Activated CD4-positive, alpha-beta T cell treated with anti-CD3 and anti-CD28 coated beads, Interleukin-2, amount 10 ng/mL, durations not matched to agents 24 days and 14 days (primary cell): ENCODE measurements at regions of chr4 and their contacts with region 1.

Region 1: DNA sequence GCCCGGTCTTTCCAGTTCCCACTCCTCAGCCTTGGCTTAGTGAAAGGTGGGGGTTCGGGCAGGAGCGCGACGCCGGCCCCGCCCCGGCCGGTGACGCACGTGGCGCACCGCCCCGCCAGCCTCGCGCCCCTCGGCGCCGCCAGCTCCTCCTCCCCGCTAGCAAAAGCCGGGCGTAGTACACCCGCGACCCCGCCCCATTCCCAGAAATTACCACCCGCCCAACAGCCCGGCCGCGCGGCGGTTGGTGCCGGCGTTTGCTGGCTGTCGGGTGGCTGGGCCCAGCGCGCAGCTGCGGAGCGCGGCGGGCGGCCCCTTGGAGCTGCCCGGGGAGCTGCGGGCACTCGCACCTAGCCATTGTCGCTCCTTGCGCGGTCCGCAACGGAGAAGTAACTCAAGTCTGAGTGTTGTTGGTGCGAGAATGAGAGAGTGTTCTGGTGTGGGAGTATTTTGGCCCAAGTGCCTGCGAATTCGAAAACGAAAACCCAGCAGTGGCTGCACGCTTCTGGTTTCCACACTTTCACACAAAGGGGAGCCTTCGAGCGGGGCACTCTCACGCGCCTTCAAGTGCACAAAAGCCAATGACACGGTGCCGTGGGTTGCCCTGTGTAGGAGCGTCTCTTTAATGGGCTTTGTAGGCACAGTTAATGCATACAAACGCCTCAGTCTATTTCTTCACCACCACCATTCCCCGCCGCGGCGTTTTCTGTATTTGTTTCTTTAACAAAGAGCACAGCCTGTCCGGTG is 1.0 kb upstream of the ELF2 start:
- DNase-seq: peak; percentile 100
- H3K4me3 Mint-ChIP-seq: peak overlapping the region; percentile 94
- H3K27ac Mint-ChIP-seq: peak overlapping the region; percentile 97
- H3K4me1 Mint-ChIP-seq: peaks cover 28% of the 10 kb centered on the region
- H3K27me3 Mint-ChIP-seq: peaks cover 29% of the 10 kb centered on the region

Region 2: GRCh38 chr4:138996090-138996489 is 181.9 kb before region 1 on chr4:
- intact Hi-C with region 1: no loop called
- DNase-seq: no peak
- H3K4me3 Mint-ChIP-seq: no peak overlapping the region
- H3K27ac Mint-ChIP-seq: no peak overlapping the region
- H3K4me1 Mint-ChIP-seq: no peaks in the 10 kb centered on the region
- H3K27me3 Mint-ChIP-seq: peaks cover 9% of the 10 kb centered on the region

Region 3: GRCh38 chr4:139015269-139015947 is 162.6 kb before region 1 on chr4 and contains the start of gene NOCT:
- intact Hi-C with region 1: loop called (anchors 1 kb)
- DNase-seq: peak; percentile 97
- H3K4me3 Mint-ChIP-seq: peak within 1 kb of the TSS; percentile 93
- H3K27ac Mint-ChIP-seq: peak within 1 kb of the TSS; percentile 96
- H3K4me1 Mint-ChIP-seq: peaks cover 35% of the 10 kb centered on the region
- H3K27me3 Mint-ChIP-seq: no peaks in the 10 kb centered on the region
- total RNA-seq, gene NOCT: 21.3 and 25.3 TPM in 2 replicates

Region 4: DNA sequence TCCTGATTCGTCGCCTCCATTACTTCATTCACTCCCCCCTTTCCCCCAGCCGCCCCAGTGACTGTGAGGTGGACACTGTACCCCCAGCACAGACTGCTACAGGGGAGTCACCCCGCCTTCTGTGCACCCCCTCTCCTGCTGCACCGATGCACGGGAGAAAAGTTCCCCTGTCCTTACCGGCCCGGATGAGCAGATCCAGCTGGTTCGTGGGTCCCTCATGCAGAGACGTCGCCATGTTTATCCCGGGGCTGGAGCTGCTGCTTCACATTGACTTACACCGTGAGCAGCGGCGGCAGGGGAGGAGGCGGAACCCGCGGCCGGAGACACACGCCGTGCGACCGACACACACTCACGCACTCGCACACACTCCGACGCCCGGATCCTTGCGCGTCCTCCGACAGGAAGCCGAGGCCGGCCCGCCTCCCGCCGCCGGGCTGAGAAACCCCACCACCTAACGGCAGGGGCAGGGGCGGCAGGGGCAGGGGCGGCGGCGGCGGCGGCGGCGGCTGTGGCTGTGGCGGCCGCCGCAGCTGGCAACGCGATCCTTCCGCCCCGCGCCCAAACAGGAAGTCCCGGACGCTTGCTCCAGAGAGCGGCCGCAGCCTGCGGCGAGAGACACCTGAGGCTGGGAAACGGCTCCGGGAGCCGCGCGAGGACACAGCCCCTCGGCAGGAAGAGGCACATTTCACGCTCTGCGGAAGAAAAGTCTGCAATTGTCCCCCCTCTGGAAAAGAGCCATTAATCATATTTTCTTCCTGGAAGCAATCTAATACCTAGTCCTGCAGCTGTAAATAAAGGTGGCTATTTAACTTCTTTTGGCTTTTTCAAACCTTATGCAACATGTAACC is 93.9 kb before region 1 on chr4:
- intact Hi-C with region 1: loop called (anchors 1 kb)
- DNase-seq: peak; percentile 95
- H3K4me3 Mint-ChIP-seq: peak overlapping the region; percentile 100
- H3K27ac Mint-ChIP-seq: peak overlapping the region; percentile 100
- H3K4me1 Mint-ChIP-seq: peaks cover 30% of the 10 kb centered on the region
- H3K27me3 Mint-ChIP-seq: peaks cover 2% of the 10 kb centered on the region

Region 5: DNA sequence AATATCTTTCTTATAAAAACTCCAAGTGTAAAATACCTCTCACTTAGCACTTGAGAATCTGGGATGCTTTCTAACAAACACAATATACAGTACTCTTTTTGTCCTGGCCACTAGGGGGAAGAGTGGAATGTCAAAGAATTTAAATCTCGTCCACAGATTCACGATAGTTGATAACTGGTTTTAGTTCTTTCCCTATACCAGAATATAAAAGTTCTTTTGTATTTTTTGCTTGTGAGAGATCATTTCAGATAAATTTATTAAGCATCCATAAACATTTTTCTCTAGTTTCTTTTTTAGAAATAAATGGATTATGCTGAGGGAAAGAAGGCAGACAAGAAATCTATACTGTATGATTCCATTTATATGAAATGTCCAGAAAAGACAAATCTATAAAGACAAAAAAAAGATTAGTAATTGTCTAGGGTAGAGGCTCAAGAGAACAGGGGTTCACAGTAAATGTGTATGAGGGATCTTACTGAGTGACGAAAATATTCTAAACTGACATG is 51.5 kb after region 1 on chr4:
- intact Hi-C with region 1: loop called (anchors 2 kb)
- DNase-seq: peak; percentile 75
- H3K4me3 Mint-ChIP-seq: no peak overlapping the region
- H3K27ac Mint-ChIP-seq: no peak overlapping the region
- H3K4me1 Mint-ChIP-seq: no peaks in the 10 kb centered on the region
- H3K27me3 Mint-ChIP-seq: no peaks in the 10 kb centered on the region

Region 6: DNA sequence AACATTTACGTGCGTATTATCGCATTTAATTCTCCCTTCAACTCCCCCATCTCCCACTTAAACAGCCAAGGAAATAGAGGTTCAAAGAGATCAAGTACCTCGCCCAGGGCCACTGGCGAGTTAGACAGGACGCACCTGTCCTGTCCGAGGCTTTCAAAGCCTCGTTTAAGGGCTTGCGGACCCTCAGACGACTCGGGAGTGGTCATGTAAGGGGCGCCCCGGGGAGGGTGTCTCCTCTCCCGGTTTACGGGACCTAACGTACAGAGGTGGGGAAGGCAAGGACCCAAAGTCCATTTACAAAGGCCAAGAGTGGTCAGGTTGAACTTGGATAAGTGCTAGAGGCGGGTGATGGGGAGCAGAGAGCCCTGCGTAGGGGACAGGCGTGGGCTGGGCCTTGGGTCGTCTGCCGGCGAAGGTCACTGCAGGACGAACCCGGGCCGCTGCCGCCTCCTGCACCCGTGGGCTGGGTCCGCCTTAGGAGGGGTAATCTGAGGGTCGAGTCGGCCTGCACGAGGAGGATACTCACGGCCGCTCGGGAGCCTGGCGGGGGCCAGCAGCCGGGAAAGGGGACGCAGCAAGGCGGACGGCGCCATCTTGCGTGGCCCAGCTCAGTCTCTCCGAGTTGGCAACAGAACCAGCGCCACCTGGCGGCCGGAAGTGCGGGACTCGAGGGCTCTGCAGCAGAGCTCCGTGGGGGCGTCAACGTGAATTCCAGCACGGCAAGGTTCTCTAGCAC is 117.3 kb after region 1 on chr4:
- intact Hi-C with region 1: loop called (anchors 1 kb)
- DNase-seq: peak; percentile 99
- H3K4me3 Mint-ChIP-seq: peak overlapping the region; percentile 95
- H3K27ac Mint-ChIP-seq: peak overlapping the region; percentile 98
- H3K4me1 Mint-ChIP-seq: peaks cover 36% of the 10 kb centered on the region
- H3K27me3 Mint-ChIP-seq: no peaks in the 10 kb centered on the region

Region 7: DNA sequence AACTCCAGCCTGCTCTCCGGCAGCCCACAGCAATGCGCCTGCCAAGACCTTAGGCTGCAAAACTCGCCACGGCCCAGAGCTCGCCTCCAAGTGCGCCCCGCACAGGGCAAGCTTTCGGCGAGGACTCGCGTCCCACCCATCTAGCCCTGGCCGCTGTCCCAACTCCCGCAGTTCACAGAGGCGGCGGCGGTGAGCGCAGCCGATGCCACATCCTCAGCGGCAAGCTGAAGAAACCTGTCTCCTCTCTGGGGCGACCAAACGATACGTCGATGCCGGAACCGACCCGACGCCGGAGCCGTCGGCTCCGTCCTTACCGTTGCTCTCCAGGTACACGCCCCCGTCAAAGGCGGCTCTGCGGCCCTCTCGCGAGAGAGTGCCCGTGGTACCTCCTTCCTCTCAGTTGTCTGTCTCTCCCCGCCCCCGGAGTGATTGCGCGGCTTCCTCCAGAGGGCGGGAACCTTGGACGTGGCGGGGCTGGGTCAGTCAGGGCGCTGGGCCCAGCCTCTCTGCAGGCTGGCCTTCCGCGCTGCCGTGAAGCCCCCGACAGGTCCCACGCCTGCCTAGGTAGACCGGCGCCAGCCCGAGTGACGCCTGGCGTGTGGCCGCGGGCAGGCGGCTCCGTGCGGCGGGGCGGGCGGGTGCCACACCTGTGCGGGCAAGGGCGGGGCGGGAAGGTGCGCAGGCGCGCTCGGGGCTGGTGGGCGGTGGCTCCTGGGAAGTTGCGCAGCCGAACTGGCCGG is 275.5 kb after region 1 on chr4:
- intact Hi-C with region 1: loop called (anchors 1 kb)
- DNase-seq: peak; percentile 99
- H3K4me3 Mint-ChIP-seq: peak overlapping the region; percentile 92
- H3K27ac Mint-ChIP-seq: peak overlapping the region; percentile 96
- H3K4me1 Mint-ChIP-seq: peaks cover 49% of the 10 kb centered on the region
- H3K27me3 Mint-ChIP-seq: no peaks in the 10 kb centered on the region

Region 8: DNA sequence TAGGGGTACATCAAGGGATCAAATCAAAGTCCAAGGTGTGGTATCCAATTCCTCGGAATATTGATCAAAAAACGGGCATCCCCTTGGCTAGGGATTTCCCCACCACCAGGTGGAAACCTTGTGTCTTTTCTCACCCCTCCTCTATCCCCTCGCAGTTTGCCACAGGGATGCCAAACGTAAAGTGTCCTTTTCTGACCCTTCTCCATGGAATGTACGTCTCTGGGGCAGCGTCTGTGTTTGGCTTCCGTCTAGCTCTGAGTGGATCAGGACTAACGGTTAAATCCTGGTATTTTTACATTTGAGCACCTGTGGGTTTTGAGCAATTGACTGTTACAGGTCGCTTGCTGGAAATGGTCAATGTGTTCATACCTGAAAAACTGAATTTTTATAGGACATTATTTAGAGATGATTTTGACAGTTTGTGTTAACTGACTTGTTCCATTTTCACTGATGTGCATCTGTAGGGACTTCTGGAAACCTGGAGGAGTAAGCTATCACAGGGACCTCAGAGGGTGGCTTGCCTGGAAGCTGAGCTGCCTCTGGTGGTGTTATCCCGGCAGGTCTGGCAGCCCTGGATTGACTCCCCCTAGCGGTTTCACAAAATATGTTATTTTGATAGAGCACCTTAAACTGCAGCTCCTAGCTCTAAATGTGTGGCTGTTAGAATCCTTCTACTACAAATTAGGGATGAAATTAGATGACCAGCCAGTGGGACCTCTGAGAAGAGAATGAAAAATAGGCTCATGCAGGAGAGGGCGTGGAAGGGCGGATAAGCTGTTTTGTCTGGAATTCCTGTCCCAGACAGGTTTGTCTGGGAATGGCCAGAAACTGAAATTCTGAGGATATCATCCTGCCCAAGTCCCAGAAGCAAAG is 478.8 kb after region 1 on chr4:
- intact Hi-C with region 1: loop called (anchors 5 kb)
- DNase-seq: peak; percentile 84
- H3K4me3 Mint-ChIP-seq: peak overlapping the region; percentile 75
- H3K27ac Mint-ChIP-seq: peak overlapping the region; percentile 98
- H3K4me1 Mint-ChIP-seq: peaks cover 32% of the 10 kb centered on the region
- H3K27me3 Mint-ChIP-seq: peaks cover 5% of the 10 kb centered on the region